Ovary (tissue), 10 donors: ENCODE measurements at regions of chr4 and their contacts with region 1.

Region 1: GRCh38 chr4:10582059-10582686 is 102.4 kb downstream of the CLNK start:
- DNase-seq: peak; percentile 47 to 69 (median 56)
- H3K4me3 ChIP-seq: no peak overlapping the region
- H3K27ac ChIP-seq: peak overlapping the region in 1 of 2 donors; percentile 3
- H3K4me1 ChIP-seq: peaks cover 1% of the 10 kb centered on the region
- H3K27me3 ChIP-seq: no peaks in the 10 kb centered on the region
- CTCF ChIP-seq: peak; percentile 88 to 91 (median 90)
- EP300 ChIP-seq: no peak
- POLR2A ChIP-seq: no peak

Region 2: GRCh38 chr4:10442976-10443375 is 139.2 kb before region 1 on chr4:
- intact Hi-C with region 1: no loop called
- DNase-seq: no peak
- H3K4me3 ChIP-seq: no peak overlapping the region
- H3K27ac ChIP-seq: no peak overlapping the region
- H3K4me1 ChIP-seq: peaks cover 2% of the 10 kb centered on the region
- H3K27me3 ChIP-seq: no peaks in the 10 kb centered on the region
- CTCF ChIP-seq: no peak
- EP300 ChIP-seq: no peak
- POLR2A ChIP-seq: no peak

Region 3: GRCh38 chr4:10715696-10716095 is 133.5 kb after region 1 on chr4:
- intact Hi-C with region 1: loop called in 1 of 4 experiments (anchors 10 kb)
- DNase-seq: no peak
- H3K4me3 ChIP-seq: no peak overlapping the region
- H3K27ac ChIP-seq: no peak overlapping the region
- H3K4me1 ChIP-seq: no peaks in the 10 kb centered on the region
- H3K27me3 ChIP-seq: no peaks in the 10 kb centered on the region
- CTCF ChIP-seq: no peak
- EP300 ChIP-seq: no peak
- POLR2A ChIP-seq: no peak